GM12878 (cell line): ENCODE measurements at regions of chr15 and their contacts with region 1.

Region 1: DNA sequence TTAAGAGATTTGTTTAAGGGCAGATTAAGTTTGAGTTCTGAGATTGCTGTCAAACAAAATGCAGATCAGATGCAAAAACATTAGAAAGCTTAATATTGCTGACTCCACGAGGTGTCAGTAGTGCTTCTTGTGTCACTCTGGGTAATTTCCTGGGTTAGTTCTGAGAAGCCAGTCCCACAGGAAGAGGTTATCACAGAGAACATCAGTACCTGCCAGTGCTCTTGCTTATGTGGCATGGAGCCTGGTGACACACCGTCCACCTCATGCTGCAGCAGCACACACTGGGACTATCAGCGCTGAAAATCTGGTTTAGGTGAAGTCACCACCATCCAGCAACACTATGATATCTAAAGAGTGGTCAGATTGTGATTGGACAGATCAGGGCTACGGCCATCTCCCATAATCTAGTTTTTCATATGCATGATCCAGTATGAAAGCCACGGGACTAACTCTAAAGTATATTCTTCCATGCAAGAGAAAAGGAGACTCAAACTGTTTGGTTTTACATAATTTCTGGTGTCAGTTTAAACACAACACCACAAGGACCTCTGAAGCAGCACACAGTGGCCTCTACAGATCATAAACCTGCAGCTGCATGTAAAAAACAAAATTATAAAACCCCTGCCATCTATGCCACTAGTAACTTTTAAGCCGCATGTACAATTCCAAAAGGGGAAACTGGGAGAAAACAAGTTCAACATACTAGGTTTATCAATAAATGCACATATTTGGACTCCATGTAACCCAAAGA is 36.1 kb upstream of the MYO5C start:
- DNase-seq: peak; percentile 87
- ATAC-seq: peak; percentile 99
- H3K4me3 ChIP-seq: no peak overlapping the region
- H3K27ac ChIP-seq: peak overlapping the region; percentile 22
- H3K4me1 ChIP-seq: peaks cover 15% of the 10 kb centered on the region
- H3K27me3 ChIP-seq: no peaks in the 10 kb centered on the region
- CTCF ChIP-seq: peak; percentile 59 to 90 (median 78)
- EP300 ChIP-seq: no peak
- POLR2A ChIP-seq: no peak
- RAD21 ChIP-seq: peak; percentile 96

Region 2: GRCh38 chr15:52206446-52206845 is 125.2 kb before region 1 on chr15:
- CTCF ChIA-PET with region 1: no interaction called
- POLR2A ChIA-PET with region 1: no interaction called
- RAD21 ChIA-PET with region 1: no interaction called
- SMC1A ChIA-PET with region 1: no interaction called
- in situ Hi-C with region 1: no loop called
- intact Hi-C with region 1: no loop called
- DNase-seq: no peak
- ATAC-seq: no peak
- H3K4me3 ChIP-seq: no peak overlapping the region
- H3K27ac ChIP-seq: no peak overlapping the region
- H3K4me1 ChIP-seq: no peaks in the 10 kb centered on the region
- H3K27me3 ChIP-seq: no peaks in the 10 kb centered on the region
- CTCF ChIP-seq: no peak
- EP300 ChIP-seq: no peak
- POLR2A ChIP-seq: no peak
- RAD21 ChIP-seq: no peak

Region 3: DNA sequence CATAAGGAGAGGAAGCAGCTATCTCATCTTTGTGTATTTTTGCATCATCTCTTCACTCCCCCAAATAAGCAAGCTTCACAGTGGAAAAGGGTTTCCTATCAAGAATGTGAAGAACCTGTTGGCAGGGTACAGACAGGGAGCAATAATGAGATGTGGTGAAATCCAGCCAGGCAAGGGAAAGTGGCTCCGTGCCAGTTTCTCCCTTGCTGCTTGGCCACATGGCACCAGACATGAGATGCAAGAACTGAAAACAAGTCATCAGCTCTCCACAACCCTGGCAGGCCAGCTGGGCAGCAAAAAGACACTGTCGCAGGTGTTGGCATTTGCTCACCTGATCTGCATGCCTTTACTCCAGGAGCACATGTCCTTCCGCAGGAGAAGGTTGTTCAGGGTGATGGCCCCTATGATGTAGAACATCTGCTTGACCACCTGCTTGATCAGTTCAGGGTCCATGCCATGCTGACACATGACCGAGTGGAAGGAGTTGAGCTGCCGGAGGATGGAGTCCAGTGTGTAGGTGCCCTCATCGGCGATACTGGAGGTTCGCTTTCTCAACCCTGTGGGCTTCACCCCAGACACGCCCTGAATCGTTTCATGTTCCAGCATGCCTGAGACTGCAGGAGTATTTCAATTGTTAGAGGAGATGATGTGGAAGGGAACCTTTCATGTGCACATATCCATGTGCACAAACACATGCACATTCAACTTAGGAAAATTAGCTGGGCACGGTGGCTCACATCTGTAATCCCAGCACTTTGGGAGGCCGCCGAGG is 12.8 kb before region 1 on chr15:
- CTCF ChIA-PET with region 1: interaction called, 6 read pairs
- POLR2A ChIA-PET with region 1: no interaction called
- RAD21 ChIA-PET with region 1: no interaction called
- SMC1A ChIA-PET with region 1: interaction called, 10 read pairs
- in situ Hi-C with region 1: no loop called
- intact Hi-C with region 1: no loop called
- DNase-seq: no peak
- ATAC-seq: no peak
- H3K4me3 ChIP-seq: no peak overlapping the region
- H3K27ac ChIP-seq: no peak overlapping the region
- H3K4me1 ChIP-seq: no peaks in the 10 kb centered on the region
- H3K27me3 ChIP-seq: no peaks in the 10 kb centered on the region
- CTCF ChIP-seq: no peak
- EP300 ChIP-seq: no peak
- POLR2A ChIP-seq: no peak
- RAD21 ChIP-seq: no peak

Region 4: DNA sequence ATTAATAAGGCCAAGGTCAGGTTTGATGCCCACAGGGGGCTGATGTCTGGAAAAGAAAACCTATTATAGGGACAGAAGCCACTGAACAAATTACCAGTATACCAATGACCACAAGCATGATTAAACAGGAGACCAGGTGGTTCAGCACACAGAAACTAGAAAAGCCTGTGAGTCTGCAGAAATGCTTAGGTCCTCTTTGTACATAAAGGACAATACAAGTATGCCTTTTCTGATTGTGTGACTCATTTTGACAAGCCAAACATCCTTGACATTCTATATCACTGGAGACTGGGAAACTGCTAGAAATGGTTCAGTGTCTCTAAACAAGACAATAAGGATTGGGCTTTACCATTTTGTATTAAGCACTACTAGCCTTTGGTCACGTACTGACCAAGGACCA is 77.2 kb after region 1 on chr15:
- CTCF ChIA-PET with region 1: no interaction called
- POLR2A ChIA-PET with region 1: no interaction called
- RAD21 ChIA-PET with region 1: no interaction called
- SMC1A ChIA-PET with region 1: interaction called, 3 read pairs
- in situ Hi-C with region 1: no loop called
- intact Hi-C with region 1: loop called (anchors 5 kb)
- DNase-seq: no peak
- ATAC-seq: peak; percentile 70
- H3K4me3 ChIP-seq: no peak overlapping the region
- H3K27ac ChIP-seq: no peak overlapping the region; the same call in 1 of the 2 replicates
- H3K4me1 ChIP-seq: no peaks in the 10 kb centered on the region
- H3K27me3 ChIP-seq: no peaks in the 10 kb centered on the region
- CTCF ChIP-seq: no peak
- EP300 ChIP-seq: no peak
- POLR2A ChIP-seq: no peak
- RAD21 ChIP-seq: no peak

Region 5: DNA sequence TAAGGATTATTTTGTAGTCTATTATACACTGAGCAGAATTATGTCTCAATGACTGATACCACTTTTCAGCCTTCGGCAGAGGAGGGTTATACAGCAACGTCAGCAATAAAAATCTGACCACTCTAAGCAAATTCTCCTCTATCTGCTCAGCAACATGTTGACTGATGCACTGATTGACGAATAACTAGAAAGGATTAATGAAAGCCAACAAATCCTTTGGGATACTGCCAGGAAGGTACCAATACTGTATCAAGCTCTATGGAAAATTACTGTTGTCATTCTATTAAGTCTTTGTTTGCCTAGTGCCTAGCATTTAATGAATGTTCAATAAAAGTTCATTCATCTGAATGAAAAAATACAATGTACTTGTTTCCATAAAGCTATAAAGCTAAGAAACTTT is 231.9 kb after region 1 on chr15:
- CTCF ChIA-PET with region 1: interaction called, 6 read pairs
- POLR2A ChIA-PET with region 1: interaction called, 4 read pairs
- RAD21 ChIA-PET with region 1: interaction called, 10 read pairs
- SMC1A ChIA-PET with region 1: interaction called, 11 read pairs
- in situ Hi-C with region 1: no loop called
- intact Hi-C with region 1: loop called (anchors 2 kb)
- DNase-seq: no peak
- ATAC-seq: no peak
- H3K4me3 ChIP-seq: peak overlapping the region; percentile 33
- H3K27ac ChIP-seq: no peak overlapping the region
- H3K4me1 ChIP-seq: peaks cover 21% of the 10 kb centered on the region
- H3K27me3 ChIP-seq: no peaks in the 10 kb centered on the region
- CTCF ChIP-seq: no peak
- EP300 ChIP-seq: no peak
- POLR2A ChIP-seq: no peak
- RAD21 ChIP-seq: no peak

Region 6: DNA sequence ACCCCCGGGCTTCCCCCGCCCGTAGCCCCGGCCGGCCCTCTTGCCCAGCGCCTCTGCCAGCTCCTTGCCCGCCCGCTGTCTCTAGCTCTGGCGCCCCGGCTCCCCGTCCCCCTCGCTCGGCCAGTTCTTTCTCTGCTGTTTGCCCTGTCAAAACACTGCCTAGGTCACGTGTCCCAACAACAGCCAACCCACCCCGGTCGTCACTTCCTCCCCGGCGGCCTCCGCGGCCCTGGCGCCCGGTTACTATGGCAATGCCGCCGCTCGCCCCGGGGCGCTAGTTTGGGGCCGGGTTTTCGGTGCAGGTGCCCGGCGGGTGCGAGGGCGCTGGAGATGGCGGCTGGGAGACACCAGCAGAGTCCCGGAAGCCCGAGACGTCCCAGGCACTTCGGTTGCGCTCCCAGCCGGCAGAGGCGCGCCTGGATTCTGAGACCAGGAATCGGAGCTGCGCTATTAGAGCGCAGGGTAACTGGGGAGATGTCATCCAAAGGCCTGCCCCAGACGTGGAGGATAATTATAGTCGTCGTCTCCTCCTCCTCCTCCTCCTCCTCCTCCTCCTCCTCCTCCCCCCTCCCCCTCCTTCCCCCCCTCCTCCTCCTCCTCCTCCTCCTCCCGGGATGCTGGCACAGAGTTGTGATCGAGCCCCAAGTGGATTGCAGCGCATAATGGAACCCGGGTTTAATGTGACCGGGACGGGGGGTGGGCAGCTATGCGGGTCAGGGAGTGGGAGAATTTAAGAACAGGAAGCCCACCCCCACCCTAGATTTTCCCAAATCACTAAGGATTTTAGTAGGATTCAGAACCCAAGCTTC is 347.8 kb after region 1 on chr15 and contains the start of gene ATOSA:
- CTCF ChIA-PET with region 1: interaction called, 4 read pairs
- POLR2A ChIA-PET with region 1: no interaction called
- RAD21 ChIA-PET with region 1: interaction called, 6 read pairs
- SMC1A ChIA-PET with region 1: interaction called, 5 read pairs
- in situ Hi-C with region 1: no loop called
- intact Hi-C with region 1: loop called (anchors 2 kb)
- DNase-seq: peak; percentile 48
- ATAC-seq: peak; percentile 84
- H3K4me3 ChIP-seq: peak within 1 kb of the TSS; percentile 93
- H3K27ac ChIP-seq: peak within 1 kb of the TSS; percentile 84
- H3K4me1 ChIP-seq: peaks cover 43% of the 10 kb centered on the region
- H3K27me3 ChIP-seq: no peaks in the 10 kb centered on the region
- CTCF ChIP-seq: no peak
- EP300 ChIP-seq: no peak
- POLR2A ChIP-seq: peak; percentile 74
- RAD21 ChIP-seq: no peak
- polyA plus RNA-seq, gene ATOSA: 6.8 to 7.9 TPM